ENCODE measurements at regions of chr12 and their contacts with region 1.

Region 1: GRCh38 chr12:84329938-84330337 is 582.7 kb downstream of the SLC6A15 start:
- DNase-seq: no peak
- ATAC-seq: no peak
- H3K4me3 ChIP-seq: no peak overlapping the region
- H3K4me3 Mint-ChIP-seq: no peak overlapping the region
- H3K27ac ChIP-seq: no peak overlapping the region
- H3K27ac Mint-ChIP-seq: no peak overlapping the region
- H3K4me1 ChIP-seq: no peaks in the 10 kb centered on the region
- H3K4me1 Mint-ChIP-seq: no peaks in the 10 kb centered on the region
- H3K27me3 ChIP-seq: no peaks in the 10 kb centered on the region
- H3K27me3 Mint-ChIP-seq: no peaks in the 10 kb centered on the region
- CTCF ChIP-seq: no peak

Region 2: GRCh38 chr12:84384384-84384783 is 54.4 kb after region 1 on chr12:
- CTCF ChIA-PET with region 1: no interaction called
- POLR2A ChIA-PET with region 1: no interaction called
- intact Hi-C with region 1: no loop called
- DNase-seq: no peak
- ATAC-seq: no peak
- H3K4me3 ChIP-seq: no peak overlapping the region
- H3K4me3 Mint-ChIP-seq: no peak overlapping the region
- H3K27ac ChIP-seq: no peak overlapping the region
- H3K27ac Mint-ChIP-seq: no peak overlapping the region
- H3K4me1 ChIP-seq: no peaks in the 10 kb centered on the region
- H3K4me1 Mint-ChIP-seq: no peaks in the 10 kb centered on the region
- H3K27me3 ChIP-seq: no peaks in the 10 kb centered on the region
- H3K27me3 Mint-ChIP-seq: no peaks in the 10 kb centered on the region
- CTCF ChIP-seq: no peak

Region 3: DNA sequence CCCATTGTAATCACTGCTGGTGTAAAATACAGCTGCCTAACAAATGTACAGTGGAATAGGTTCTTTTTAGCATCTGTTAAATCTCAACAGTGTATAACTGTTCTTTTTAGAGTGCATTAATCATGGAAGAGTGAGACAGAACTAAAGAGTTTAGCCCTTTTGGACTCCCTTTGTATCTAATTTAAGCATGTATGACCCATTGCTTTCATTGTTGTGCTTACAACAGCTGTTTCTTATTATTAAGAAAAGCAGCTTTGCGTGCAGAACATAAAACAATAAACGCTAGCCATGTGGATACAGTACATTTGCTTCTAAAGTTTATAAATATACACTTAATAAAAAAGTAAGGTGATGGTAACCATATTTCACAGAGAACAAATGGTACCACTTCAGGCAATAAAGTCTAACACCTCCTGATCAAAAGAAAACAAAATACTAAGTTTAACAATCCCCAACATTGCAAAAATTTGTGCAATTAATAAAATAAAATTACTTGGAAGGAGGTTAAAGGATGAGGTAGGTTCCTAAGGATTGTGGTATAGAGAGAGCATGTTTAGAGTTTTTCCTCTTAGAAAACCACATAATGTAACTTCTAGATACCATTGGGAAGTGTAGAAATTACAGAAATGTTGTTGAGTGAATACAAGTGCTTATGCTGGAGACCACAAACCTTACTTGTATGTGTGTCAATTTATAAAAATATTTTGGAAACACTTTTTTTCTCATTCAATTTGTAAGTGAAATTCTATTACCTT is 134.0 kb after region 1 on chr12:
- CTCF ChIA-PET with region 1: no interaction called
- POLR2A ChIA-PET with region 1: no interaction called
- intact Hi-C with region 1: no loop called
- DNase-seq: no peak
- ATAC-seq: no peak
- H3K4me3 ChIP-seq: no peak overlapping the region
- H3K4me3 Mint-ChIP-seq: no peak overlapping the region
- H3K27ac ChIP-seq: no peak overlapping the region
- H3K27ac Mint-ChIP-seq: no peak overlapping the region
- H3K4me1 ChIP-seq: no peaks in the 10 kb centered on the region
- H3K4me1 Mint-ChIP-seq: no peaks in the 10 kb centered on the region
- H3K27me3 ChIP-seq: no peaks in the 10 kb centered on the region
- H3K27me3 Mint-ChIP-seq: no peaks in the 10 kb centered on the region
- CTCF ChIP-seq: no peak

Region 4: DNA sequence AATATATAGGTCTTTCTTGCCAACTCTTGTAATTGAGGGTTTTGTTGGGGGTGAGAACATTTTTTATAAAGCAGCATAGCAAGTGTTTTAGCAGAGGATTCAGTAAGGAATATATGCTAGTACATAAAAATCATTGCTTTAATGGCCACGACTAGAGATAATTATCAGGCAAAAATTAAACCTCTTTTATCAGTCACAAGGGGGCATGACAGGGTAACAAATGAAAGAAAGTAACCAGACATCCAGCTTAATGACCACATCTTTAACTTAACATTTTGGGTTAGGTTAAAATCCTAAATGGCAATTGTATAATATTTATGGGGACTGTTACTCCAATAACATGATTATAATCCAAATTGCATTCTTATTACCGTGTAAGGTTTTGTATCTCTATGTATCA is 825.8 kb after region 1 on chr12:
- CTCF ChIA-PET with region 1: no interaction called
- POLR2A ChIA-PET with region 1: no interaction called
- intact Hi-C with region 1: loop called in 1 of 2 experiments (anchors 5 kb)
- DNase-seq: no peak
- ATAC-seq: no peak
- H3K4me3 ChIP-seq: no peak overlapping the region
- H3K4me3 Mint-ChIP-seq: no peak overlapping the region
- H3K27ac ChIP-seq: no peak overlapping the region
- H3K27ac Mint-ChIP-seq: no peak overlapping the region
- H3K4me1 ChIP-seq: no peaks in the 10 kb centered on the region
- H3K4me1 Mint-ChIP-seq: no peaks in the 10 kb centered on the region
- H3K27me3 ChIP-seq: no peaks in the 10 kb centered on the region
- H3K27me3 Mint-ChIP-seq: no peaks in the 10 kb centered on the region
- CTCF ChIP-seq: no peak

Region 5: GRCh38 chr12:86230516-86231146 is 1900.7 kb after region 1 on chr12:
- CTCF ChIA-PET with region 1: no interaction called
- POLR2A ChIA-PET with region 1: no interaction called
- intact Hi-C with region 1: no loop called
- DNase-seq: no peak
- ATAC-seq: no peak
- H3K4me3 ChIP-seq: no peak overlapping the region
- H3K4me3 Mint-ChIP-seq: no peak overlapping the region
- H3K27ac ChIP-seq: no peak overlapping the region
- H3K27ac Mint-ChIP-seq: no peak overlapping the region
- H3K4me1 ChIP-seq: no peaks in the 10 kb centered on the region
- H3K4me1 Mint-ChIP-seq: no peaks in the 10 kb centered on the region
- H3K27me3 ChIP-seq: no peaks in the 10 kb centered on the region
- H3K27me3 Mint-ChIP-seq: no peaks in the 10 kb centered on the region
- CTCF ChIP-seq: no peak

Measured in CD4-positive, alpha-beta T cell (primary cell).